ENCODE measurements at regions of chr20 and their contacts with region 1.

Region 1: GRCh38 chr20:45771182-45771759 is 20.4 kb downstream of the WFDC3 start:
- DNase-seq: peak; percentile 73 to 87 (median 74)
- ATAC-seq: peak; percentile 87
- H3K4me3 ChIP-seq: no peak overlapping the region
- H3K27ac ChIP-seq: no peak overlapping the region
- H3K4me1 ChIP-seq: peaks cover 0 to 2% of the 10 kb centered on the region in 2 experiments; a peak in 2 of 5 replicates
- H3K27me3 ChIP-seq: peaks cover 5 to 8% of the 10 kb centered on the region in 2 experiments
- CTCF ChIP-seq: peak; percentile 91 to 99 (median 92)
- EP300 ChIP-seq: no peak
- POLR2A ChIP-seq: no peak
- RAD21 ChIP-seq: peak; percentile 95 to 97

Region 2: GRCh38 chr20:45306431-45306982 is 464.8 kb before region 1 on chr20 and contains the start of gene RBPJL:
- CTCF ChIA-PET with region 1: interaction called, 12 read pairs
- POLR2A ChIA-PET with region 1: interaction called, 3 read pairs
- in situ Hi-C with region 1: no loop called
- intact Hi-C with region 1: no loop called
- DNase-seq: peak; percentile 61 to 82 (median 74)
- ATAC-seq: peak; percentile 84
- H3K4me3 ChIP-seq: no peak within 1 kb of the TSS
- H3K27ac ChIP-seq: no peak within 1 kb of the TSS
- H3K4me1 ChIP-seq: peaks cover 4 to 27% of the 10 kb centered on the region in 2 experiments; a peak in 3 of 5 replicates
- H3K27me3 ChIP-seq: peaks cover 0 to 48% of the 10 kb centered on the region in 2 experiments; a peak in 3 of 5 replicates
- CTCF ChIP-seq: peak; percentile 75 to 94 (median 87)
- EP300 ChIP-seq: no peak
- POLR2A ChIP-seq: no peak
- RAD21 ChIP-seq: peak in 1 of 2 experiments; percentile 39; a peak in 2 of 4 replicates
- polyA plus RNA-seq, gene RBPJL: not detected

Region 3: GRCh38 chr20:45373353-45374100 is 397.7 kb before region 1 on chr20:
- CTCF ChIA-PET with region 1: interaction called, 3 read pairs
- POLR2A ChIA-PET with region 1: no interaction called
- in situ Hi-C with region 1: no loop called
- intact Hi-C with region 1: loop called (anchors 5 kb)
- DNase-seq: peak; percentile 84 to 95 (median 88)
- ATAC-seq: peak; percentile 96
- H3K4me3 ChIP-seq: peak overlapping the region; percentile 41
- H3K27ac ChIP-seq: peak overlapping the region; percentile 74
- H3K4me1 ChIP-seq: peaks cover 7 to 15% of the 10 kb centered on the region in 2 experiments; a peak in 4 of 5 replicates
- H3K27me3 ChIP-seq: no peaks in the 10 kb centered on the region
- CTCF ChIP-seq: peak; percentile 95 to 97 (median 95)
- EP300 ChIP-seq: no peak; the same call in 1 of the 2 replicates
- POLR2A ChIP-seq: peak; percentile 64
- RAD21 ChIP-seq: peak; percentile 87 to 92

Region 4: DNA sequence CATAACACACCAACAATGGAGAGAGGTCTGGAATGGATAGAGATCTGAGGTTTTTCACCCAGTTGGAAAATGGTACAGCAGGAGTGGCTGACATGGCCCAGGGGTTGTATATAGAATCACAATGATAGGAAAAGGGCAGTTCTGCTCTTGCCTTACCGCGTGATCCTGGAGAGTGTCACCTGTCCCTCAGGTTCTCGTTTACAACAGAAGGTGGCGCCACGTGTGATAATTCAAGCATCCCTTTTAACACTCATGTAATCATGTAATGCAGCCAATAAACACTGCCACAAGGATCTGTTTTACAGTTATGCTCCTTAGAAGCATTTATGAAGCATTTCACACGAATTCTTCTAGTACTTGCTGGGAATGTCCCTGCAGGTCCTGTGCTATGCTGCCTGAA is 314.6 kb before region 1 on chr20:
- CTCF ChIA-PET with region 1: interaction called, 4 read pairs
- POLR2A ChIA-PET with region 1: no interaction called
- in situ Hi-C with region 1: loop called (anchors 10 kb)
- intact Hi-C with region 1: loop called (anchors 5 kb)
- DNase-seq: peak in 3 of 4 experiments; percentile 34 to 55 (median 49)
- ATAC-seq: peak; percentile 83
- H3K4me3 ChIP-seq: no peak overlapping the region
- H3K27ac ChIP-seq: no peak overlapping the region
- H3K4me1 ChIP-seq: no peaks in the 10 kb centered on the region
- H3K27me3 ChIP-seq: peaks cover 17 to 19% of the 10 kb centered on the region in 2 experiments
- CTCF ChIP-seq: peak; percentile 50 to 57 (median 56); a peak in 5 of 6 replicates
- EP300 ChIP-seq: no peak
- POLR2A ChIP-seq: no peak
- RAD21 ChIP-seq: peak in 1 of 2 experiments; percentile 38; a peak in 1 of 4 replicates

Region 5: GRCh38 chr20:45592574-45593189 is 178.6 kb before region 1 on chr20:
- CTCF ChIA-PET with region 1: interaction called, 29 read pairs
- POLR2A ChIA-PET with region 1: no interaction called
- in situ Hi-C with region 1: no loop called
- intact Hi-C with region 1: loop called (anchors 1 kb)
- DNase-seq: peak; percentile 19 to 71 (median 40)
- ATAC-seq: peak; percentile 92
- H3K4me3 ChIP-seq: no peak overlapping the region
- H3K27ac ChIP-seq: no peak overlapping the region
- H3K4me1 ChIP-seq: no peaks in the 10 kb centered on the region
- H3K27me3 ChIP-seq: peaks cover 0 to 3% of the 10 kb centered on the region in 2 experiments; a peak in 1 of 5 replicates
- CTCF ChIP-seq: peak; percentile 87 to 99 (median 99)
- EP300 ChIP-seq: no peak
- POLR2A ChIP-seq: no peak
- RAD21 ChIP-seq: peak; percentile 79 to 83